ENCODE measurements at regions of chr1 and their contacts with region 1.

Region 1: GRCh38 chr1:240998024-240998423 is 359.0 kb downstream of the RGS7 start:
- DNase-seq: no peak
- ATAC-seq: no peak
- H3K4me3 ChIP-seq: no peak overlapping the region
- H3K27ac ChIP-seq: no peak overlapping the region
- H3K4me1 ChIP-seq: no peaks in the 10 kb centered on the region
- H3K27me3 ChIP-seq: no peaks in the 10 kb centered on the region
- CTCF ChIP-seq: no peak
- POLR2A ChIP-seq: no peak
- RAD21 ChIP-seq: no peak

Region 2: GRCh38 chr1:240946926-240947325 is 51.1 kb before region 1 on chr1:
- CTCF ChIA-PET with region 1: no interaction called
- POLR2A ChIA-PET with region 1: no interaction called
- dilution Hi-C with region 1: no loop called
- in situ Hi-C with region 1: no loop called
- intact Hi-C with region 1: no loop called
- DNase-seq: peak; percentile 54
- ATAC-seq: peak; percentile 97
- H3K4me3 ChIP-seq: no peak overlapping the region
- H3K27ac ChIP-seq: no peak overlapping the region
- H3K4me1 ChIP-seq: no peaks in the 10 kb centered on the region
- H3K27me3 ChIP-seq: no peaks in the 10 kb centered on the region; the same call in 1 of the 2 replicates
- CTCF ChIP-seq: peak; percentile 75
- POLR2A ChIP-seq: no peak
- RAD21 ChIP-seq: peak; percentile 80

Region 3: GRCh38 chr1:241022366-241022765 is 24.3 kb after region 1 on chr1:
- CTCF ChIA-PET with region 1: interaction called, 5 read pairs
- POLR2A ChIA-PET with region 1: interaction called, 12 read pairs
- dilution Hi-C with region 1: no loop called
- in situ Hi-C with region 1: no loop called
- intact Hi-C with region 1: no loop called
- DNase-seq: peak; percentile 1
- ATAC-seq: no peak
- H3K4me3 ChIP-seq: no peak overlapping the region
- H3K27ac ChIP-seq: no peak overlapping the region
- H3K4me1 ChIP-seq: no peaks in the 10 kb centered on the region
- H3K27me3 ChIP-seq: no peaks in the 10 kb centered on the region
- CTCF ChIP-seq: no peak
- POLR2A ChIP-seq: no peak
- RAD21 ChIP-seq: no peak

Measured in IMR-90 (cell line).